ENCODE measurements at regions of chr5 and their contacts with region 1.

Region 1: GRCh38 chr5:80216753-80217596 is 38.9 kb downstream of the SERINC5 start:
- DNase-seq: peak in 1 of 5 donors; percentile 55
- H3K4me3 ChIP-seq: peak overlapping the region in 1 of 2 donors; percentile 25
- H3K4me3 Mint-ChIP-seq: peak overlapping the region in 7 of 8 donors; percentile 46 to 96 (median 81)
- H3K27ac ChIP-seq: peak overlapping the region; percentile 37
- H3K27ac Mint-ChIP-seq: peak overlapping the region; percentile 31 to 99 (median 93)
- H3K4me1 ChIP-seq: peaks cover 98% of the 10 kb centered on the region
- H3K4me1 Mint-ChIP-seq: peaks cover 75 to 97% (median 86%) of the 10 kb centered on the region in 4 donors
- H3K27me3 ChIP-seq: no peaks in the 10 kb centered on the region
- H3K27me3 Mint-ChIP-seq: no peaks in the 10 kb centered on the region

Region 2: DNA sequence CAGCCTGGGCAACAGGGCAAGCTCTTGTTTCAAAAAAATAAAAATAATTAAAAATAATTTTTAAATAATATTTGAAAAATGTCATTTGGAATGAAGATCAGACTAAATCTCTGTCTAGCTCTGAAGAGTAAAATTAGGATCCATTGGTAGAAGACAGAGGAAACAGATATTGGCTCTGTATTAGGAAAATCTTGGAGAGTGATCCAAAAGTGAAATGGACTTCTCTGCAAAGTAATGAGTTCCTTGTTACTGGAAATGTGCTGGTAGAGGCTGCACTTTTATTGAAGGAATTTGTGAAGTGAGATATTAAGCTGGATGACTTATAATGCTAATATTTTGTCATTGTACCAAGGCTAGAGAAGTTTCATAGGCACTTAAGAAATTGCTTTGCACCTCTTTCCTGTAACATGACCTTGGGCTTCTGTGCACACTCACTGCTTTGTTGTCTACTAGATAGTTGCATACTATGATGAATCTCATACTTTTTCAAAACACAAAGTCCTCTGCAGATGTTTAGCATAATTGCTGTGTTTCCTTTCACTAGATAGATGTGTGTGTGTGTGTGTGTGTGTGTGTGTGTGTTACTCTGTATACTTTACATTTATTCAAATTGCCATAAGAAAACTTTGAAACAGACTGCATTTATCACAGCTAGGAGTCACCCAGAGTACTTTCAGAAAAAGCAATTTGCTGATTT is 168.7 kb before region 1 on chr5:
- CTCF ChIA-PET with region 1: no interaction called
- POLR2A ChIA-PET with region 1: no interaction called
- intact Hi-C with region 1: no loop called
- DNase-seq: no peak
- H3K4me3 ChIP-seq: no peak overlapping the region
- H3K4me3 Mint-ChIP-seq: no peak overlapping the region
- H3K27ac ChIP-seq: no peak overlapping the region
- H3K27ac Mint-ChIP-seq: no peak overlapping the region
- H3K4me1 ChIP-seq: no peaks in the 10 kb centered on the region
- H3K4me1 Mint-ChIP-seq: no peaks in the 10 kb centered on the region
- H3K27me3 ChIP-seq: no peaks in the 10 kb centered on the region
- H3K27me3 Mint-ChIP-seq: peaks cover 14 to 22% of the 10 kb centered on the region in 2 donors

Region 3: DNA sequence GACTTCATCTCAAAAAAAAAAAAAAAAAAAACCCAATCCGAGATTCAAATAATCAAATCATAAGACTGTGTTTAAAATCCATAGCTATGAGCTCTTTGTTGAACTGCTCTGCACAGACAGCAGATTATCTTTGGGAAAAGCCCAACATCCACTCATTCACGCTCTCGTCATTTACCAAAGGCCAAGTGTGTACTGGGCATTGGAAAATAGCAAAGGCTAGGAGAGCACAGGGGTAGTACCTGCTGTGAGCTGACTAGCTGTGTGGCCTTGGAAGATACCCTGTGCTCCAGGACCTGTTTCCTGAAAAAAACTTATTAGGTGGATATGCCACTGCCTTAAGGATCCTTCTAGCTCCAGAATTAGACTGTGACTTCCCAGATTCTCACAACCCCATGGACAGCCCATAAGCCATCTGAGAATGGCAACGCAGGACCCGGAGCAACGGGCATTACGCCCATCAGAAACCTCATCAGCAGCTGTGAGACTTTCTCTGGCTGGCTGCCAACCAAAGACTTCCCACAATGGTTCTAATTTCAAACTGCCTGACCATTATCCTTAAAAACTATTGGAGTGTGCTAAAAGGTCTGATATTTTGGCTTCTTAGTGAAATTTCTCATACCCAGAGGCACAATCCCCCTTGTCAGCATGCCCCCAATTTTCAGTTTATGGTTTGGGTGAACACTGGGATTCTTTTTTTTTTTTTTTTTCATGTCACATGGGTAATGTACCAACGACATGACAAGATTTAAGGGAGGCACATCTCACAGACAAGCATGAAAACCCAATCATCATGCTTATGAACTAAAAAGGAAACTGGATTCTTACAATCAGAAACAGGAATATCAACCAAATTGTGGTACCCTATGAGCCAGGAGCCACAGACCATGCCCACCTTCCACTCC is 22.1 kb after region 1 on chr5:
- CTCF ChIA-PET with region 1: no interaction called
- POLR2A ChIA-PET with region 1: interaction called, 7 read pairs
- intact Hi-C with region 1: loop called (anchors 2 kb)
- DNase-seq: no peak
- H3K4me3 ChIP-seq: no peak overlapping the region
- H3K4me3 Mint-ChIP-seq: peak overlapping the region; percentile 27 to 87 (median 82)
- H3K27ac ChIP-seq: peak overlapping the region; percentile 20
- H3K27ac Mint-ChIP-seq: peak overlapping the region; percentile 63 to 93 (median 86)
- H3K4me1 ChIP-seq: peaks cover 78% of the 10 kb centered on the region
- H3K4me1 Mint-ChIP-seq: peaks cover 54 to 88% (median 70%) of the 10 kb centered on the region in 4 donors
- H3K27me3 ChIP-seq: no peaks in the 10 kb centered on the region
- H3K27me3 Mint-ChIP-seq: no peaks in the 10 kb centered on the region

Region 4: GRCh38 chr5:80246001-80246758 is 29.2 kb after region 1 on chr5:
- CTCF ChIA-PET with region 1: interaction called, 3 read pairs
- POLR2A ChIA-PET with region 1: interaction called, 9 read pairs
- intact Hi-C with region 1: loop called (anchors 2 kb)
- DNase-seq: no peak
- H3K4me3 ChIP-seq: no peak overlapping the region
- H3K4me3 Mint-ChIP-seq: peak overlapping the region in 7 of 8 donors; percentile 22 to 83 (median 65)
- H3K27ac ChIP-seq: peak overlapping the region; percentile 39
- H3K27ac Mint-ChIP-seq: peak overlapping the region; percentile 66 to 88 (median 86)
- H3K4me1 ChIP-seq: peaks cover 70% of the 10 kb centered on the region
- H3K4me1 Mint-ChIP-seq: peaks cover 51 to 84% (median 67%) of the 10 kb centered on the region in 4 donors
- H3K27me3 ChIP-seq: no peaks in the 10 kb centered on the region
- H3K27me3 Mint-ChIP-seq: no peaks in the 10 kb centered on the region